ENCODE measurements at regions of chr17 and their contacts with region 1.

Region 1: DNA sequence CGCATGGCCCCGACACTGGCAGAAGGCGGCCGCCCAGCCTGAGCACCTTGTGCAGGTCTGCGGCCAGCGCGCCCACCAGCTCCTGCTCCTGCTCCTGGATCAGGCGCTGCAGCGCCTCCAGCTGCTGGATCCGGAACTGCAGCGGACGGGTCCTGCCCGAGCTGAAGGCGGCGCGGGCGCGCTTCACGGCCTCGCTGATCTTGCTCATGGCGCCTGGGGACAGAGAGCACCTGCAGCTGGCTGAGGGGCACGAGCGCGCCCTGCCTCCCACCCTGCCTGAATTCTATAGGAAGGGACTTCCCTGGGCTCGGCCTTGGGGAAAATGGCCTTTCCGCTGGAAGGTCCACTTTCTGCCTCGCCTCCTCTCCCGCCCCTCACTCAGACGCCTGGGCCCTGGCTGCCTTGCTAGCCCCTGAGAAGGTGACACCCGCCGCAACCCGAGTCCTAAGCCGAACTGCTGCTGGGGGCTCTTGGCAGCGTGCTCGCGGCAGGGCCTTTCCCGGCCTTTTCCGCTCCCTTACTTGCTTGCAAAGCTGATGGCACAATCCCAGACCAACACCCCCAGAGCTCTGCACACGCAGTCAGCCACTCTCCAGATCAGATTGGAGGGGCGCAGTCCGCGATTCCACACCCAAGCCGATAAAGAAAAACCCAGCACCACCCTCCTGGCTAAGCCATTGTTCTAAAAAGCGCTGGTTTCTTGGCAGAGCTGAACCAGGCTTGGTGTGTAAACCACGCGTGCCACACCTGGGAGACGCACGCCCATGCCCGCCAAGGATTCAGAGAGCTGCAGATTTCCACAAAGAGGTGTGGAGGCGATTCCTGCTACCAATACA is 3.0 kb downstream of the ALDH3A1 start:
- DNase-seq: peak; percentile 81 to 91 (median 88)
- H3K4me3 ChIP-seq: peak overlapping the region in 4 of 7 experiments; percentile 22 to 80 (median 62)
- H3K27ac ChIP-seq: no peak overlapping the region
- H3K4me1 ChIP-seq: peaks cover 0 to 8% (median 6%) of the 10 kb centered on the region in 4 experiments
- H3K27me3 ChIP-seq: peaks cover 0 to 2% (median 0%) of the 10 kb centered on the region in 5 experiments

Region 2: DNA sequence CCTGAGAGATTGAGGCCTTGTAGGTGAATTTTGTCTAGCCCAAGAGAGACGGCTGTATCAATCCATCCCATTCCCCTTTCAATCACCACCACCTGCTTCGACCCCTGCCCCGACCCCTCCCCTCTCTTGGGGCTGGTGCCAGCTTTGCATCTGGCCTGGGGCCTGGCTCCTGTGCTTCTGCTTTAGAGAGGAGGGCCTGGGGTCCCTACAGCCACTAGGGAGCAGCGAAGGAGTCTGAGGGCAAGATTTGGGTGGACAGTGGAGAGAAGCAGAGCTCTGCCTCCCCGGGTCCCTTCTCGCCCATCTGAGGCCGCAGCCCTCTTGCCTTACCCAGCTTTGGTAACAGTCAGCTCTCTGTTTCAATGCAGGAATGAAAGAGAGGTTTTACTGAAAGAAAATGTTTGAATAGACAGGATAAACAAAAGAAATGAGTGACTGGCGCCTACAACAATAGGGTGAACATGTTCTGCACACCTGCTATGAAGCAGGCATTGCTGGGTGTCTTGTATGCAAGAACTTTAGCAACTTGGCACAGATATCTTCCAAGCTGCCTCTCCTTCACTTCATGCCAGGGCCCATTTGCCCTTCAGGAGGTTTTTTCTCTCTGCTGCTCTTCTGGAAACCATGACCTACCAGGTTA is 154.1 kb before region 1 on chr17:
- CTCF ChIA-PET with region 1: no interaction called
- POLR2A ChIA-PET with region 1: no interaction called
- DNase-seq: no peak
- H3K4me3 ChIP-seq: no peak overlapping the region
- H3K27ac ChIP-seq: no peak overlapping the region
- H3K4me1 ChIP-seq: peaks cover 0 to 10% (median 0%) of the 10 kb centered on the region in 4 experiments
- H3K27me3 ChIP-seq: no peaks in the 10 kb centered on the region

Region 3: GRCh38 chr17:19672009-19672750 is 73.0 kb before region 1 on chr17:
- CTCF ChIA-PET with region 1: no interaction called
- POLR2A ChIA-PET with region 1: no interaction called
- DNase-seq: peak in 1 of 3 donors; percentile 2
- H3K4me3 ChIP-seq: no peak overlapping the region
- H3K27ac ChIP-seq: no peak overlapping the region
- H3K4me1 ChIP-seq: no peaks in the 10 kb centered on the region
- H3K27me3 ChIP-seq: no peaks in the 10 kb centered on the region

Region 4: DNA sequence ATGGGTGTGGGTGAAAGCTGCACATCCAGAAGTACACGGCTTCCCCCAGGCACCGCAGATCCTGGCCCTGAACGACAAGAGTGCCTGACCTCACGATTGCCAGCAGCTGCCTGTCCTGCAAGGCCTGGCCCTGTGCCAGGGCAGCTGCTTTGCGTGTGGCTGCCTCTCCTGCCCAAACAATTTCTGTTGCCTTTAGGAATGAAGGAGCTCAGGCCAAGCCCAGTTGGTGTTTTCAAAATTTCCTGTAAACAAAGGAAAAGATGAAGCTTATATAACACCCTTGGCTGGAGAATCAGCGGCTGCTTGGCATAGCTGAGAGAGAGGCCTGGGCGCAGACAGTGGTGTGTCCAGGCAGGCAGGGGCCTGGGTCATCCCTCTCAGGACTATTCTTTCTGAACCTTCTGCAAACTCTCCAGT is 17.1 kb before region 1 on chr17:
- CTCF ChIA-PET with region 1: interaction called, 22 read pairs
- POLR2A ChIA-PET with region 1: no interaction called
- DNase-seq: peak in 2 of 3 donors; percentile 49 to 53
- H3K4me3 ChIP-seq: no peak overlapping the region
- H3K27ac ChIP-seq: no peak overlapping the region
- H3K4me1 ChIP-seq: peaks cover 0 to 30% (median 18%) of the 10 kb centered on the region in 4 experiments
- H3K27me3 ChIP-seq: no peaks in the 10 kb centered on the region

Region 5: GRCh38 chr17:19781488-19782458 is 36.6 kb after region 1 on chr17:
- CTCF ChIA-PET with region 1: no interaction called
- POLR2A ChIA-PET with region 1: no interaction called
- DNase-seq: no peak
- H3K4me3 ChIP-seq: no peak overlapping the region
- H3K27ac ChIP-seq: no peak overlapping the region
- H3K4me1 ChIP-seq: no peaks in the 10 kb centered on the region
- H3K27me3 ChIP-seq: no peaks in the 10 kb centered on the region